Common myeloid progenitor, CD34-positive (primary cell): ENCODE measurements at regions of chr3 and their contacts with region 1.

Region 1: DNA sequence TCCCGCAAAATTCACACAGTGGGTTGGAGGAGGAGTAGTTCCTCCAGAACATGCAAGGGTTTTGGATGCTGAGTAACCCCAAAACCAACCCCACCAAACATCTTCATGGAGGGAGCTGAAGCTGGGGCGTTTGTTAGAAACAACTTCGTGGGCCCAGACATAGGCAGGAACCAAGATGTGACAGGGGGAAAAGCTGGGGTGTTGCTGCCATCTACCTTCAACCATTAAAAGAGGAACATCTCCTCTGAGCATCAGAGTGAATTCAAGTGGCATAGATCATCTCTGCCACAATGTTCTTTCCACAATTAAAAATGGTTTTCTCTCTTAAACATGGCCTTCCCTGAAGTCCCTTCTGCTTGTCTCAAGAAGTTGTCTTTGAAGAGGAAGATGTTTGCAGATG is 20.5 kb downstream of the SIDT1 start:
- DNase-seq: peak; percentile 66 to 83 (median 79)
- H3K4me3 ChIP-seq: no peak overlapping the region
- H3K27ac ChIP-seq: no peak overlapping the region
- H3K4me1 ChIP-seq: no peaks in the 10 kb centered on the region
- H3K27me3 ChIP-seq: no peaks in the 10 kb centered on the region

Region 2: GRCh38 chr3:113468539-113468938 is 84.3 kb before region 1 on chr3:
- CTCF ChIA-PET with region 1: no interaction called
- POLR2A ChIA-PET with region 1: no interaction called
- DNase-seq: no peak
- H3K4me3 ChIP-seq: no peak overlapping the region
- H3K27ac ChIP-seq: no peak overlapping the region
- H3K4me1 ChIP-seq: no peaks in the 10 kb centered on the region
- H3K27me3 ChIP-seq: no peaks in the 10 kb centered on the region

Region 3: DNA sequence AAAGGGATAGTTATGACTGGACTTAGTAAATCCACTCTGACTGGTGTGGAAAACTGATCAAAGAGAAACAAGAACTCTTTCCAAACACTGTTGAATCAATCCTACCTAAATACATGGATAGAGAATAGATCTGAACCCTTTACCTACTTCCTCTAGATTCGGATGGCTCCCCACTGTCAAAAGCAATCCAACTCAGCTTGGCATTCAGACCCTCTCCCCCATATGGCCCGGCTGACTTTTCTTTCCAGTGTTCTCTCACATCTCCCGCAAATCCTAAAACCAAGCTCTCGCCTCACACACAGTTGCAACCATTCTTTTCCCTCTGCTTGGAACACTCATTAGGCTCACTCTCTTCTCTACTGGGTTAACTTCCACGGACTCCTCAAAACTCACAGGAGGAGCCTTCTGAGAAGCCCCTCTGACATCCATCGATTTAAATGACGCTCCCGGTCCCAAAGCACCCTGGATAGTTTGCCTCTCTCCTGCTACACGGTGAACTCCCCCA is 38.5 kb before region 1 on chr3:
- CTCF ChIA-PET with region 1: interaction called, 33 read pairs
- POLR2A ChIA-PET with region 1: no interaction called
- DNase-seq: no peak
- H3K4me3 ChIP-seq: peak overlapping the region; percentile 61 to 96 (median 93)
- H3K27ac ChIP-seq: peak overlapping the region; percentile 77 to 87
- H3K4me1 ChIP-seq: peaks cover 10 to 23% (median 16%) of the 10 kb centered on the region in 4 experiments
- H3K27me3 ChIP-seq: no peaks in the 10 kb centered on the region

Region 4: GRCh38 chr3:113535898-113536297 is 17.0 kb before region 1 on chr3:
- CTCF ChIA-PET with region 1: interaction called, 18 read pairs
- POLR2A ChIA-PET with region 1: no interaction called
- DNase-seq: peak; percentile 26 to 50 (median 48)
- H3K4me3 ChIP-seq: no peak overlapping the region
- H3K27ac ChIP-seq: no peak overlapping the region
- H3K4me1 ChIP-seq: peaks cover 32 to 44% (median 37%) of the 10 kb centered on the region in 4 experiments
- H3K27me3 ChIP-seq: no peaks in the 10 kb centered on the region

Region 5: DNA sequence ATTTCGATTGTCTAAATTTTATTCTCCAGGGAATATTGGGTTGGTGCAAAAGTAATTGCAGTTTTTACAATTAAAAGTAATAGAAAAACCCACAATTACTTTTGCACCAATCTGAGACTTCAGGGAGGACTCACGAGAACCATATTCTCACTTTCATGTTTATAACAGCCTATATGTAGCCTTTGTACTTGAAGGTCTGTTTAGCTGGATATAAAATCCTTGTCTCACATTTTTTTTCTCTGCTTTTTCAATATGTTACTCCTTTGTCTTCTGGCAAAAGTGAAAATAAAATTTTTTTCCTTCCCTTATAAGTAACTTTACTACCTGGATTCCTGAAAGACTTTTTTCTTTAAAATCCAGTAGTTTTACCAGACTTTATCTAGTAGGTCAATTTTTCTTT is 11.3 kb before region 1 on chr3:
- CTCF ChIA-PET with region 1: interaction called, 18 read pairs
- POLR2A ChIA-PET with region 1: no interaction called
- DNase-seq: no peak
- H3K4me3 ChIP-seq: no peak overlapping the region
- H3K27ac ChIP-seq: no peak overlapping the region
- H3K4me1 ChIP-seq: peaks cover 4 to 12% (median 10%) of the 10 kb centered on the region in 4 experiments
- H3K27me3 ChIP-seq: no peaks in the 10 kb centered on the region

Region 6: GRCh38 chr3:113585720-113586119 is 32.9 kb after region 1 on chr3:
- CTCF ChIA-PET with region 1: no interaction called
- POLR2A ChIA-PET with region 1: no interaction called
- DNase-seq: no peak
- H3K4me3 ChIP-seq: no peak overlapping the region
- H3K27ac ChIP-seq: no peak overlapping the region
- H3K4me1 ChIP-seq: no peaks in the 10 kb centered on the region
- H3K27me3 ChIP-seq: no peaks in the 10 kb centered on the region